ENCODE measurements at regions of chr15 and their contacts with region 1.

Region 1: DNA sequence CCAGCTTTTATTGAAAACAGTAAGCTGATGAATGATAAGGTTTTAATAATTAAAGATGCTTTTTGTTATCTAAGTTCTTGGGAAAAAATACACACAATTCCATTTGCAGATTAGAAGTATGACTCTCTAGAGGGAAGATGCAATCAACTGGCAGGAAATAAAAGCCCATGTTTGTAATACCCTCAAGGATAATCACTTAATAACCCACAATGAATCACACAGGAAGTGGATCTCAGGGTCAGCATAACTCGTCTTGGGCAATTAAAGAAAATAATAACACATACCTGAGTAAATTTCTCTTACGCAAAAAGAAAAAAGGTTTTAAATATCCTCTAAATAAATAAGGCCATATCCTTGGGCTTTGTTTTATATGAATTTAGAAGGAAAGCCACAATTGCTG is 9.4 kb upstream of the EID1 start:
- DNase-seq: no peak
- ATAC-seq: no peak
- H3K4me3 ChIP-seq: no peak overlapping the region
- H3K27ac ChIP-seq: no peak overlapping the region
- H3K4me1 ChIP-seq: no peaks in the 10 kb centered on the region
- H3K27me3 ChIP-seq: no peaks in the 10 kb centered on the region
- CTCF ChIP-seq: no peak
- POLR2A ChIP-seq: no peak

Region 2: GRCh38 chr15:48975472-48976419 is 107.2 kb after region 1 on chr15:
- in situ Hi-C with region 1: loop called in 1 of 4 experiments (anchors 5 kb)
- intact Hi-C with region 1: no loop called
- DNase-seq: peak; percentile 23 to 56
- ATAC-seq: peak; percentile 88 to 97
- H3K4me3 ChIP-seq: peak overlapping the region; percentile 56 to 85 (median 66)
- H3K27ac ChIP-seq: peak overlapping the region in 3 of 4 donors; percentile 12 to 63 (median 58)
- H3K4me1 ChIP-seq: peaks cover 0 to 4% of the 10 kb centered on the region in 2 donors
- H3K27me3 ChIP-seq: no peaks in the 10 kb centered on the region
- CTCF ChIP-seq: peak; percentile 77 to 94 (median 86)
- POLR2A ChIP-seq: no peak